A549 (cell line): ENCODE measurements at regions of chr19 and their contacts with region 1.

Region 1: DNA sequence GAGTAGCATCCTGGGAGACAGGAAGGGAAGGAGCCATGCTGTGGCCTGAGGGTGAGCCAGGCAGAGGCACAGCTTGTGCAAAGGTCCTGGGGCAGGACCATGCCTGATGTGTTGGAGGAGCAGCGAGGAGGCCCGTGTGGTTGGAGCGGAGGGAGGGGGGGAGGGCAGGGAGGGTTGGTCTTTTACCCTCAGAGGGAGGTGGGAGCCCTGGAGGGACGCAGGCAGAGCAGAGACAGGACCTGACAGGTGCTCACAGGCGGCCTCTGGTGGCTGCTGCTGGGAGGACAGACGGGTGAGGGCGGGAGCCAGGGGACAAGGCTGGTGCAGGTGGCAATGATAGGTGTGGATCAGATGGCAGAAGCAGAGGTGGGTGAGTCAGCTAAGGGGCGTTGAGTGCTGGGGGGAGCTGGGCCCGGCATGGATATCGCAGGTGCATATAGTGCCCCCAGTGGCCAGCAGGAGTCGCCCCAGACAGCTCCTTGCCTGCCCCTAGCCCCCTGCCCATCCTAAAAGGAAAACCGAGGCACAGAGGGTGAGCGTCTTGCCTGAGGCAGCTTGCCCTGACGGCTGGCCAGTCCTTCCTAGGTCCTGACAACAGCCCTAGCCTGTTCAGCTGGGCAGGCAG is 9.8 kb upstream of the GNA15 start:
- DNase-seq: peak; percentile 33 to 40
- ATAC-seq: peak; percentile 86 to 92; a peak in 5 of 6 replicates
- H3K4me3 ChIP-seq: no peak overlapping the region
- H3K27ac ChIP-seq: no peak overlapping the region
- H3K4me1 ChIP-seq: no peaks in the 10 kb centered on the region
- CTCF ChIP-seq: peak; percentile 58
- EP300 ChIP-seq: no peak
- POLR2A ChIP-seq: no peak
- RAD21 ChIP-seq: peak; percentile 23 to 28; a peak in 2 of 5 replicates

Region 2: DNA sequence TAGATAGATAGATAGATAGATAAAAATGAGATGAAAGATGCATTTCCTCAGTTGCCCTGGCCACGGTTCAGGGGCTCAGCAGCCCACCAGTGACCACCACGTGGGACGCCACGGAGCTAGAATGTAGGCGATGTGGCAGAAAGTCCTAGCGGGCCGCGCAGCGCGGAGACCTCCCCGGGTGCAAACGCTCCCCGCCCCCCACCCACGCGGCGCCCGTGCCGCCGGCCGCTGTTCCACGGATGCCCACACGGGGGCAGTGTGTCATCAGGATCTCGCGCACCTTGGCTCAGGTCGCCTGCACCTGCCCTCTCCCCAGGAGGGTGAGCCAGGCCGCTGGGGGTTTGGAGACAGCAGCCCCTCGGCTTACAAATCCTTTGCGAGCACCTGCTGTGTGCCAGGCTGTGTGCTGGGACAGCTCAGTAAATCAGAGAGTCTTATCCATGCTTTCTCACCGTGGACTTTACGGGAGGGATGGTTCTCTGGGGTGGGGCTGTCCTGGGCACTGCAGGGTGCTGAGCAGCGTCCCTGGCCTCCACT is 50.0 kb before region 1 on chr19:
- CTCF ChIA-PET with region 1: interaction called, 14 read pairs
- POLR2A ChIA-PET with region 1: no interaction called
- DNase-seq: no peak
- ATAC-seq: peak; percentile 82 to 86
- H3K4me3 ChIP-seq: 0 out of 3 replicates have a peak overlapping the region, but pooled peaks have one; percentile 17
- H3K27ac ChIP-seq: peak overlapping the region; percentile 12 to 76; a peak in 3 of 6 replicates
- H3K4me1 ChIP-seq: no peaks in the 10 kb centered on the region
- CTCF ChIP-seq: peak; percentile 74
- EP300 ChIP-seq: no peak
- POLR2A ChIP-seq: no peak
- RAD21 ChIP-seq: peak; percentile 66 to 80

Region 3: DNA sequence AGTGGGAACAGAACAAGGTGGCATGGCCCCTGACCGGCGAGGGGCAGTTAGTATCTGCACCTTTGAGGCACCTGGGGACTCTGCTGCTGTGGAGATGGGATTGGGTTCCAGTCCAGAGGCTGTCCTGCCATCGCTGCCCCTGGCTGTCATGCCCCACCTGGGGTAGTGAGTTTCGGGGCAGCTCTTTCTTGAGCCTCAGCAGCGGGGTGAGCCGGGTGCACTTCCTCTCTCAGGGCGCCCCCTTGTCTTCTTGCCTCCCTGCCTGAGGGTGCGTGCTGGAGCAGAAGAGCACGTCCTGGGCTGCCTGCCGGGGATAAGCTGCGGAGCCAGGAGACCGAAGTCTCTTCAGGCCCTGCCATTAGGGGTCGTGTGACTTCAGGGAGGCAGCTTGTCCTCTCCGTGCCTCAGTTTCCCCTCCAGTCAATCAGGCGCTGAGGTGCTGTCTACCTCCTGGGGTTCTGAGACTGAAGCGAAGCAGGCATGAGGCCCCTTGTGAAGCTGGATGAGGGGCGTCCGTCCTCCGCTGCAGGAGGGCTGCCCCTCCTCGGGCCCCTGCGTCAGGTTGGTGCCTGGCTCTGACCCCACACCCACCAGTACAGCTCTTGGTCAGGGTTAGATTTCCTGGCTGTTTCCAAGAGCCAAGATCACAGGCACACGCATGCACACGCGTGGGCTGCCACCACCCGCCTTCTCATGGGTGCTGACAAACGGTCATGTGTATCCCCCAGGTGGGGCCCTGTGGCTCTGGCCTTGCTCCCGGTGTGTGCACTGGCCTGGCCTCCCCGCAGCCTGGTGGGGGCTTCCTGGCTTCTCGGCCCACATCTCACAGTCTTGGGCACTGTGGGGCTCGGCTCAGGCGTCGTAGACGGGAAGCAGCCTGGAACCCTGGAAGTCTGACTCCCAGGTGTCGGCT is 23.5 kb before region 1 on chr19:
- CTCF ChIA-PET with region 1: interaction called, 18 read pairs
- POLR2A ChIA-PET with region 1: no interaction called
- DNase-seq: no peak
- ATAC-seq: no peak
- H3K4me3 ChIP-seq: no peak overlapping the region
- H3K27ac ChIP-seq: no peak overlapping the region
- H3K4me1 ChIP-seq: peaks cover 4% of the 10 kb centered on the region; the same call in 1 of the 3 replicates
- CTCF ChIP-seq: no peak
- EP300 ChIP-seq: no peak
- POLR2A ChIP-seq: no peak
- RAD21 ChIP-seq: no peak

Region 4: DNA sequence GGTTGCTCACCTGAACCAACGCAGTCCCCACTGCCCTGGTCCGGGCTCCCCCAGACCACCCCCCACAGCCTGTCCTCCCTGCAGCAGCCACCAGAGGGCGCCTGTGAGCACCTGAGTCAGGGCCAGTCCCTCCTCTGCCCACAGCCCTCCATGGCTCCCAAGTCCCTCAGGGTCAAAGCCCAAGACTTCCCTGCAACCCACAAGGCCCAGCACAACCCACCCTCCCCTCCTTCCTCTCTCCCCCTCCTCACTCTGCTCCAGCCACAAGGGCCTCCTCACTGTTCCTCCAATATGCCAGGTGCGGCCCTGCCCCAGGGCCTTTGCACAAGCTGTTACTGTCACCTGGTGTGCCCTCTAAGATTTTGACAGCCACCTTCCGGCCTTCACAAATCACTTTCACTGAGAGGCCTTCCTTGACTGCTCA is 20.7 kb after region 1 on chr19:
- CTCF ChIA-PET with region 1: interaction called, 87 read pairs
- POLR2A ChIA-PET with region 1: interaction called, 4 read pairs
- DNase-seq: no peak
- ATAC-seq: peak in 1 of 2 experiments; percentile 67; a peak in 3 of 6 replicates
- H3K4me3 ChIP-seq: no peak overlapping the region
- H3K27ac ChIP-seq: no peak overlapping the region
- H3K4me1 ChIP-seq: peaks cover 13% of the 10 kb centered on the region
- CTCF ChIP-seq: peak; percentile 55
- EP300 ChIP-seq: no peak
- POLR2A ChIP-seq: no peak
- RAD21 ChIP-seq: no peak; a peak in 1 of 5 replicates

Region 5: DNA sequence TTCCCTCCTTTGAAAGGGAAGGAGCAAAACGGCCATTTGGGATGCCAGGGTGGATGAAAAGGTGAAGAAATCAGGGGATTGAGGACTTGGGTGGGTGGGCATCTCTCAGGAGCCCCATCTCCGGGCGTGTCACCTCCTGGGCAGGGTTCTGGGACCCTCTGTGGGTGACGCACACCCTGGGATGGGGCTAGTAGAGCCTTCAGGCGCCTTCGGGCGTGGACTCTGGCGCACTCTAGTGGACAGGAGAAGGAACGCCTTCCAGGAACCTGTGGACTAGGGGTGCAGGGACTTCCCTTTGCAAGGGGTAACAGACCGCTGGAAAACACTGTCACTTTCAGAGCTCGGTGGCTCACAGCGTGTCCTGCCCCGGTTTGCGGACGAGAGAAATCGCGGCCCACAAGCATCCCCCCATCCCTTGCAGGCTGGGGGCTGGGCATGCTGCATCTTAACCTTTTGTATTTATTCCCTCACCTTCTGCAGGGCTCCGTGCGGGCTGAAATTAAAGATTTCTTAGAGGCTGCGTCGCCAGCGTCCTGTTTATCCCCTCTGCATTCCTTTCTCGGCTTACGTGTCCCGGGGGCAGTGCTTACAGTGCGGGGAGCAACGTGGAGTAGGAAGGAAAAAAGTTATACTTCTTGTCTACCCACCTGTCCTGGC is 37.3 kb after region 1 on chr19:
- CTCF ChIA-PET with region 1: interaction called, 164 read pairs
- POLR2A ChIA-PET with region 1: no interaction called
- DNase-seq: peak; percentile 60 to 84
- ATAC-seq: peak; percentile 95 to 97
- H3K4me3 ChIP-seq: no peak overlapping the region
- H3K27ac ChIP-seq: peak overlapping the region in 1 of 2 experiments; percentile 64; a peak in 2 of 6 replicates
- H3K4me1 ChIP-seq: peaks cover 9% of the 10 kb centered on the region; the same call in 1 of the 3 replicates
- CTCF ChIP-seq: peak; percentile 83
- EP300 ChIP-seq: no peak
- POLR2A ChIP-seq: no peak
- RAD21 ChIP-seq: peak; percentile 88 to 93